ENCODE measurements at regions of chr1 and their contacts with region 1.

Region 1: DNA sequence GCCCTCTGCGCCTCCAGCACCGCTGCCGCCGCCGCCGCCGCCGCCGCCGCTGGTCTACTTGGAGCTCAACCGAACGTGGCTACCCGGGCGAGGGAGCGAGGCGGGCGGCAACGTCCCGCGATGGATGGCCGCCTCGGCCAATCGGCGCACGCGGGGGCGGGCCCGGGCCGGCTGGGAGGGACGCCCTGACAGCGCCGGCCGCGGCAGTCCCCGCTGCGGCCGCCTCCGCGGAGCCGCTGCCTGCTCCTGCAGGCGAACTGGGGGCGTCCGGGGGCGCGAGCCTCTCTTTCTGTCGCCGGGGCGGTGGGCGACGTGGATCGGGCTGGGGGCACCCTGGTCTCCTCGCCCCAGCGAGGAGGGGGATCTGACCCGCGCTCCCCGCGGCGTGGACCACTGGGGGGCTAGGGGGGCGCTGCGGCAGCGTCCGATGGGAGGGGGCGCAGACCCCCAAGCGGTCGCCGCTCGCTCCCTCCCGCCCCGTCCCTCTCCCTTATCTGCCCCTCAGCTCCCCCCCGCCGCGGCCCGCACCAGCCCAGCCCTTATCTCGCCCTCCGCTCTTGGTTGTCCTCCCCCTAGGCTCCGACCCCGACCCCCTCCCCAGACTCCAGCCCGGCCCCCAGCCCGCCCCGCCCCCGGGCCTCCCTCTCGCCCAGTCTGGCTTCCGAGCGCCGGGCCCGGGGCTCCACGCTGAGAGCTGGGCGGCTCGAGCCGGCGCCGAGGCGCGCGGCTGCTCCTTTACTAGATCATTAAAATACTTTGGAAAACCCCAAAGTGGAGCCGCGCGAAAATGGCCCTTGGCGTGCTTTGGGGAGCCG is at the start of gene SSBP3:
- DNase-seq: peak; percentile 94 to 96 (median 94)
- ATAC-seq: peak; percentile 78 to 95 (median 90)
- H3K4me3 ChIP-seq: peak within 1 kb of the TSS; percentile 74 to 98 (median 90)
- H3K27ac ChIP-seq: peak within 1 kb of the TSS; percentile 72 to 97 (median 92)
- H3K4me1 ChIP-seq: peaks cover 4 to 56% (median 37%) of the 10 kb centered on the region in 12 donors
- H3K27me3 ChIP-seq: no peaks in the 10 kb centered on the region
- CTCF ChIP-seq: peak in 3 of 12 donors; percentile 4 to 31 (median 15)
- POLR2A ChIP-seq: peak; percentile 71 to 97
- total RNA-seq, gene SSBP3: 20.8 to 61.8 (median 48.3) TPM

Region 2: GRCh38 chr1:54016313-54017262 is 390.0 kb before region 1 on chr1:
- intact Hi-C with region 1: no loop called
- DNase-seq: no peak
- ATAC-seq: no peak
- H3K4me3 ChIP-seq: no peak overlapping the region
- H3K27ac ChIP-seq: no peak overlapping the region
- H3K4me1 ChIP-seq: no peaks in the 10 kb centered on the region
- H3K27me3 ChIP-seq: peaks cover 0 to 31% (median 0%) of the 10 kb centered on the region in 9 donors
- CTCF ChIP-seq: no peak
- POLR2A ChIP-seq: no peak

Region 3: DNA sequence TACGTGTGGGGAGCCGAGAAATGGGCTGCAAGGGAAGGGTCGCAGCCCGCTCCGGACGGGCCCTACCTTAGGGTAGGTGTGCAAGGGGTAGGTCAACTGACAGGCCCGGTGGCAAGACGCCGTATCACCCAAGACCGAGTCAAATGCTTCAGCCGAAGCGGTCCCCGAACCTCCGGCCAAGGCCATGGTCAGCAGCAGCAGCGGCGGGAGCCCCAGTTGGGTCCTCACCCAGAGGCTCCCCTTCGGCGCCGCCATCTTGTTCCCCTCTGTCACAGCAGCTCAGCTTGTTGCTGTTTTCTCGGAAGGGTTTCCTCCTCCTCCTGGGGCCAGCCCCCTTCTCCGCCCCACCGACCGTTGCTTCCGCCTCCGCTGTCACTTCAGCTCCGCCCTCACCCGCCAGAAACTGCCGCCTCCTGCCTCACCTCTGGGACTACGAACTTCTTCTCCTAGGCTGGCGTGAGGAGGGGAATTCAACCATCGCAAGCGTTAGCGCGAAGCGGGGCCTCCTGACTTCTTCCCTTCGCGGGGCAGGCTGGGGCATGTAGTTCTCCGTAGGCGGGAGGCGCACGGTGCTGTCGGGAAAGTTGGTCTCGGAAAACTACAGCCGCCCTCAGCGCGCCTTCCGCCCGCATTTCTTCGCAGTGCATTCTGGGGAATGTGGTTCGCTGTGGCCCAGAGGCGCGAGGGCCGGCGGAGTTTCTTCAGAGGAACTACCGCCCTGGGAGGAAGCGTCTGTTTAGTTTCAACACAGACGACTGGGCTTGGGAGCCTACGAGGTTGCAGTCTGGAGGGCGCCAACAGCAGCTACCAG is 353.4 kb before region 1 on chr1 and contains the starts of genes TCEANC2 and TMEM59:
- intact Hi-C with region 1: loop called in 1 of 10 experiments (anchors 5 kb)
- DNase-seq: peak; percentile 98 to 99 (median 98)
- ATAC-seq: peak; percentile 96 to 98 (median 98)
- H3K4me3 ChIP-seq: peak within 1 kb of the TSS; percentile 88 to 99 (median 95)
- H3K27ac ChIP-seq: peak within 1 kb of the TSS; percentile 88 to 98 (median 94)
- H3K4me1 ChIP-seq: peaks cover 0 to 51% (median 41%) of the 10 kb centered on the region in 12 donors
- H3K27me3 ChIP-seq: no peaks in the 10 kb centered on the region
- CTCF ChIP-seq: peak in 1 of 12 donors; percentile 7
- POLR2A ChIP-seq: peak in 1 of 2 donors; percentile 63
- total RNA-seq, gene TCEANC2: 3.0 to 6.6 (median 4.6) TPM
- total RNA-seq, gene TMEM59: 193 to 496 (median 352) TPM

Region 4: GRCh38 chr1:54121482-54122134 is 284.9 kb before region 1 on chr1:
- intact Hi-C with region 1: loop called (anchors 1 to 10 kb)
- DNase-seq: peak; percentile 77 to 89 (median 82)
- ATAC-seq: peak; percentile 80 to 94 (median 88)
- H3K4me3 ChIP-seq: peak overlapping the region in 10 of 12 donors; percentile 17 to 44 (median 24)
- H3K27ac ChIP-seq: no peak overlapping the region
- H3K4me1 ChIP-seq: peaks cover 0 to 13% (median 8%) of the 10 kb centered on the region in 12 donors
- H3K27me3 ChIP-seq: peaks cover 0 to 4% (median 0%) of the 10 kb centered on the region in 9 donors
- CTCF ChIP-seq: peak; percentile 62 to 87 (median 77)
- POLR2A ChIP-seq: no peak

Region 5: DNA sequence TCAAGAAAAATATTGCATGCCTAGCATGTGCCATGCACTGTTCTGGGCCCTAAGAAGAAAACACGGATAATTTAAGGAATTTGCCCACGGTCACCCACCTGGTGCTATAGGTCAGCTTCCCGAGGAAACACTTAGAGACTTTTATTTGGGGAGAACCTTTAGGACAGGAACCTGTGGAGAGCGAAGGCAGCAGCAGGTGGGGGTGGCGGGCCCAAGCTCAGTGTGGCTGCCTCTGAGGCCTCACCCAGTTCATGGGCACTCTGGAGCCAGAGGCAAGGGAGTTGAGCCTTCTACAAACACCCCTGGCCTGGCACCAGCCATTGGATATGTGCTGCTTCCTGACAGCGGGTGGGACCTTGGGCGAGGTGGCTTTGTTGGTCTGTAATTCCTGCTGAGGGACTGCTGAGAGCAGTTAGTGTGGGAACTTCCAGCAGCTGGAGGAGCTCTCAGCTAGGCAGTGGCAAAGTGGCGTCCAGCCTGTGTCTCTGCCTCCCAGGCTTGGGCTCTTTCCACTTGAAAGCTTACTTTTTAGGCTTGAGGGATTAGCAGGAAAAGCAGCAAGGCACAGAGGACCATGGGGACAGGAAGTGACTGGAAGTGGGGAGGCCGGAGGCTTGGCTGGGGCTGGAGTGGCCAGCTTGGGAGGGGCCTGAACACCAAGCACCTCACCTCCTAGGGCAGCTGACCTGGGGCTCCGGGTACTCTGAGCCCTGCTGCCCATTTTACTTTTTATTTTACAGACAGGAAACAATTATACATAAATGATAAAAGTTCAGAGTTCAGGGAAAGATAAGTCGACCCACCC is 187.5 kb before region 1 on chr1:
- intact Hi-C with region 1: loop called in 2 of 10 experiments (anchors 5 to 10 kb)
- DNase-seq: no peak
- ATAC-seq: peak in 2 of 4 donors; percentile 4 to 23
- H3K4me3 ChIP-seq: no peak overlapping the region
- H3K27ac ChIP-seq: peak overlapping the region in 8 of 12 donors; percentile 29 to 74 (median 54)
- H3K4me1 ChIP-seq: peaks cover 0 to 45% (median 23%) of the 10 kb centered on the region in 12 donors
- H3K27me3 ChIP-seq: no peaks in the 10 kb centered on the region
- CTCF ChIP-seq: peak in 3 of 12 donors; percentile 5 to 22 (median 22)
- POLR2A ChIP-seq: no peak

Region 6: GRCh38 chr1:54249819-54250435 is 156.6 kb before region 1 on chr1:
- intact Hi-C with region 1: no loop called
- DNase-seq: no peak
- ATAC-seq: peak; percentile 9 to 58 (median 36)
- H3K4me3 ChIP-seq: no peak overlapping the region
- H3K27ac ChIP-seq: peak overlapping the region in 3 of 12 donors; percentile 6 to 61 (median 42)
- H3K4me1 ChIP-seq: peaks cover 0 to 48% (median 13%) of the 10 kb centered on the region in 12 donors
- H3K27me3 ChIP-seq: no peaks in the 10 kb centered on the region
- CTCF ChIP-seq: no peak
- POLR2A ChIP-seq: no peak

Region 7: GRCh38 chr1:54273092-54273794 is 133.3 kb before region 1 on chr1:
- intact Hi-C with region 1: loop called in 6 of 10 experiments (anchors 2 to 10 kb)
- DNase-seq: peak in 4 of 5 donors; percentile 56 to 91 (median 68)
- ATAC-seq: peak; percentile 64 to 84 (median 76)
- H3K4me3 ChIP-seq: peak overlapping the region in 2 of 12 donors; percentile 7 to 14
- H3K27ac ChIP-seq: peak overlapping the region; percentile 25 to 94 (median 81)
- H3K4me1 ChIP-seq: peaks cover 11 to 86% (median 66%) of the 10 kb centered on the region in 12 donors
- H3K27me3 ChIP-seq: no peaks in the 10 kb centered on the region
- CTCF ChIP-seq: peak in 7 of 12 donors; percentile 15 to 53 (median 44)
- POLR2A ChIP-seq: no peak

Region 8: DNA sequence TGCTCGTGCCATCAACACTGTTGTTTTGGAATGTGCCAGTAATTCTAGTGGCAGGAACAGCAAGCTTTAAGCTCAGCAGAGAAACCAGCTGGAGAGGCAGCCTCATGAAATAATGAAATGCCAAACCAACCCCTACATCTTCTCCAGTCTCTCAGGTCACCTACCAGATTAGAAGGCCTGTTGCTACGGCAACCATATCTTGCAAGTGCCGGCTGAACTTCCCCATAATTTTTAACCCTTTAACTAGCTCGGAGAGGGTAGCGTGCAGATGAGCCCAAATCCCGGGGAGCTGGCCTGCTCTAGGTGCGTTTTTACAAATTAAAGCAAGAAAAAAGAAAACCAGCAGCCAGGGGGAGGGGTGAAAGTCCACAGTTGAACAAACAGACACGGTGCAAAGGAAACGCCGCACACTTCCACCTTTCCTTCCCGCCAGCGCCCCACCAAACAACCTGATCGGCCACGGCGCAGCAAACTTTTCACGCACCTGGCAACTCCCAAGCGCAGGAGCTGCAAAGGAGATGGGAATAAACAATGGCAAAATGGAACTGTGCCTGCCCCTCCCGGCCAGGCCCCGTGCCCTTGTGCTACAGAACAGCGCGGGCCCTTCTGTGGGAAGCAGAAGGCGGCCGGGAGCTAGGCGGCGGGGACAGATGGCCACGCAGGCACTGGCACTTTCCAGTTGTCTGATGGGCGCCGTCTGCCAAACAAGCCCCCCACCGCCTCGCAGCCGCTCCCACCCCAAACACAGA is 50.4 kb before region 1 on chr1:
- intact Hi-C with region 1: loop called in 7 of 10 experiments (anchors 2 to 10 kb)
- DNase-seq: no peak
- ATAC-seq: no peak
- H3K4me3 ChIP-seq: peak overlapping the region in 4 of 12 donors; percentile 11 to 39 (median 15)
- H3K27ac ChIP-seq: peak overlapping the region in 5 of 12 donors; percentile 2 to 30 (median 13)
- H3K4me1 ChIP-seq: peaks cover 4 to 86% (median 57%) of the 10 kb centered on the region in 12 donors
- H3K27me3 ChIP-seq: no peaks in the 10 kb centered on the region
- CTCF ChIP-seq: no peak
- POLR2A ChIP-seq: no peak

Region 9: GRCh38 chr1:54488779-54489626 is 82.5 kb after region 1 on chr1:
- intact Hi-C with region 1: loop called (anchors 1 to 2 kb)
- DNase-seq: peak; percentile 77 to 92 (median 83)
- ATAC-seq: peak; percentile 42 to 78 (median 75)
- H3K4me3 ChIP-seq: peak overlapping the region; percentile 48 to 88 (median 65)
- H3K27ac ChIP-seq: peak overlapping the region; percentile 78 to 97 (median 92)
- H3K4me1 ChIP-seq: peaks cover 3 to 32% (median 20%) of the 10 kb centered on the region in 12 donors
- H3K27me3 ChIP-seq: peaks cover 0 to 6% (median 0%) of the 10 kb centered on the region in 9 donors
- CTCF ChIP-seq: peak; percentile 93 to 99 (median 98)
- POLR2A ChIP-seq: no peak

Region 10: GRCh38 chr1:54506594-54506993 is 100.0 kb after region 1 on chr1:
- intact Hi-C with region 1: no loop called
- DNase-seq: no peak
- ATAC-seq: no peak
- H3K4me3 ChIP-seq: no peak overlapping the region
- H3K27ac ChIP-seq: no peak overlapping the region
- H3K4me1 ChIP-seq: no peaks in the 10 kb centered on the region
- H3K27me3 ChIP-seq: peaks cover 0 to 18% (median 0%) of the 10 kb centered on the region in 9 donors
- CTCF ChIP-seq: no peak
- POLR2A ChIP-seq: no peak